ENCODE measurements at regions of chrX and their contacts with region 1.

Region 1: DNA sequence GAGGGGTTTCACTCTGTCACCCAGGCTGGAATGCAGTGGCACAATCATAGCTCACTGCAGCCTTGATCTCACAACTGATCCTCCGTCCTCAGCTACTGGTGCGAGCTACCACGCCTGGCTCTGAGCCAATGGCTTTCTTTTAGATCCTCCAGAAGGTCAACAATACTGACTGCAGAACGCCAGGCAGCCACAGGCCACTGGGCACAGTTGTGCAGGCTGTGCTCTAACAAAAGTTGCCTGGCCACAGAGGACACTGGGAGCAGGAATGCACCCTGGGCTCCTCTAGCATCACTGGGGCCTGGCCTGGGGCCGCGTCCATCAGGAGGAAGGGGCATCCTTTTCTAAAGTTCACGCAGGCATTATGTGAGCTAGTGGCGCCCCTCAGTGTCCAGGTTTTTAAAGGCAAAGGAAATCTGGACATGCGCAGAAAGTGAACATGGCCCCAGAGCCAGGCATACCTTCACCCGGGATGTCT is 14.9 kb upstream of the PORCN start:
- DNase-seq: no peak
- ATAC-seq: peak; percentile 43

Region 2: DNA sequence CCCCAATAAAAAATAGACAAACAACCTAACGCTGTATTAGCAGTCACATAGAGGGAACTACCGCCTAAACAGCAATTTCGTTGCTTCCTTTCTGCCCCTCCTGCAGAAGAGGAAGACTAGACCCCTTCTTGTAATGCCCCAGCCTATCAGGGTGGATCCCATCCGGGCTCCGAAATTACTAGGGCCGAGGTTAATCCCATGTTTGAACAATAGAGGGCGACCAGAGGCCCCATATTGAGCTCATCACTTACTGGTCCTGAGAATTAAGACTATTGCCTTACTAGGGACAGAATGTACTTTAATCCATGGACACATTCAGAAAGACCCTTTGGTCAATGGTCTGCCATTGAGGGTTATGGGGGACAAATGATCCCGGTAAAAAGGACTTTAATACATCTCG is 410.7 kb before region 1 on chrX:
- intact Hi-C with region 1: loop called (anchors 10 kb)
- DNase-seq: no peak
- ATAC-seq: peak; percentile 74

Region 3: DNA sequence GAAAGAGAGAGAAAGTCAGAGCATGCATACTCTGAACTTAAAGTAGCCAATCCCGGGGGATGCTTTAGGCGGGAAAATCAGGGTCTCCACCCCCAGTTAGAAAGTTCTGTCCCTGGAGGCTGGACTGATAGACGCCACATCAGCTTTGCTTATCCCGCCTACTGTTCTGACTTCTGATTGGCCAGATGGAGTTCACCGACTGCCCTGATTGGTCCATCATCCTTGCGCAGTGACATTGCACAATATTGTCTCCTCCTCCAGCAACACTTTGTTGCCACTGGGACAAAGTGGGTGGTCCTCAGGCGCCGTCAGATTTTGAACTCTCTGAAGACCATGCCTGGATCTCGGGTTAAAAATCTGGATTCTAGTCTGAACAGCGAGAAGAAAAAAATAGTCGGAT is 187.8 kb before region 1 on chrX:
- intact Hi-C with region 1: no loop called
- DNase-seq: no peak
- ATAC-seq: no peak

Region 4: DNA sequence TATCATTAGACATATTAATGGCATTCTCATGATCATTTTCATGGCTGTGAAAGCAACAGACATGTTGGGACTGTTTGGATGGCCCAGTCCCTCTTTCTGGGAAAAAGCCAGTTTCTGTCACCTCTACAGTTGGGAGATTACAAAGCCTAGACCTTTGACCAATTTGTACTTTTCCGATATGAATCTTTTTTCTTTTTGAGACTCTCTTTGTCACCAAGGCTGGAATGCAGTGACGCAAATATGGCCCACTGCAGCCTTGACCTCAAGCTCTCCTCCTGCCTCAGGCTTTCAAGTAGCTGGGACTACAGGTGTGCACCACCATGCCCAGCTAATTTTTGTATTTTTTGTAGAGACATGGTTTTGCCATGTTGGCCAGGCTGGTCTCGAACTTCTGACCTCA is 54.9 kb after region 1 on chrX:
- intact Hi-C with region 1: no loop called
- DNase-seq: no peak
- ATAC-seq: no peak